ENCODE measurements at regions of chr1 and their contacts with region 1.

Region 1: DNA sequence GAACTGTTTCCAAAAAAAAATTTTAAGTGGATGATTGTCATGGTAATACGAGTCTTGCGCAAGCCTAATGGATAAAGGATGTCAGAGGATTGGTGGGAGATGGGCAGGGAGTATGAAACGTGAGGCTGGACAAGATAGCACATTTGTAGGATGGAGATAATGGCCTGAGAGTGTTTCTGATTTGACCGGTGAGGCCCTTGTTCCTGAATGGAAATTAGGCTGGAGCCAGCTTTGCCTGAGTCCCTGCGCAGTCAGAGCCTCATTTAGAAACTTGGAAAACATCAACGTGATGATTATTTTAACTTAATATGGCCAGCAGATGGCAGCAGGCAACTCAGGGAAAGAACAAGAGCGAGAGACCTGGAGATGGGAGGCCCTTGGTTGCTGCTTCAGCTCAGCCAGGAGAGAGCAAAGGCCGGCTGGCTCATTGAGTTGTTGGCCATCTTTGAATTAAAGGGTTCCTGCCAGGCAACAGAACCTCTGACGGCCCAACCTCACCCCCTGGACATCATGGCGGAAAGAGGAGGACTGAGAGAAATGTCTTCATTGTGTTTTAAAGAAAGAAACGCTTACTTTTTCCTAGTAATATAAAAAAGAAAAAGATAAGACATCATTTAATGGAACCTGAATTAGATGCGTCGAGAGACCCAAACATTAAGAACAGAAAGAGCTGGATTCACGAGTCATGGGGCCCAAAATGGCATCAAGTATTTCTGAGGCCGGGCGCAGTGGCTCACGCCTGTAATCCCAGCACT is 80.3 kb downstream of the SELENOF start:
- DNase-seq: peak; percentile 79 to 89
- H3K4me3 ChIP-seq: no peak overlapping the region
- CTCF ChIP-seq: no peak
- POLR2A ChIP-seq: no peak

Region 2: GRCh38 chr1:86965012-86965826 is 131.6 kb after region 1 on chr1:
- intact Hi-C with region 1: loop called (anchors 10 kb)
- DNase-seq: peak in 1 of 2 donors; percentile 16
- H3K4me3 ChIP-seq: no peak overlapping the region
- CTCF ChIP-seq: no peak
- POLR2A ChIP-seq: no peak

Region 3: DNA sequence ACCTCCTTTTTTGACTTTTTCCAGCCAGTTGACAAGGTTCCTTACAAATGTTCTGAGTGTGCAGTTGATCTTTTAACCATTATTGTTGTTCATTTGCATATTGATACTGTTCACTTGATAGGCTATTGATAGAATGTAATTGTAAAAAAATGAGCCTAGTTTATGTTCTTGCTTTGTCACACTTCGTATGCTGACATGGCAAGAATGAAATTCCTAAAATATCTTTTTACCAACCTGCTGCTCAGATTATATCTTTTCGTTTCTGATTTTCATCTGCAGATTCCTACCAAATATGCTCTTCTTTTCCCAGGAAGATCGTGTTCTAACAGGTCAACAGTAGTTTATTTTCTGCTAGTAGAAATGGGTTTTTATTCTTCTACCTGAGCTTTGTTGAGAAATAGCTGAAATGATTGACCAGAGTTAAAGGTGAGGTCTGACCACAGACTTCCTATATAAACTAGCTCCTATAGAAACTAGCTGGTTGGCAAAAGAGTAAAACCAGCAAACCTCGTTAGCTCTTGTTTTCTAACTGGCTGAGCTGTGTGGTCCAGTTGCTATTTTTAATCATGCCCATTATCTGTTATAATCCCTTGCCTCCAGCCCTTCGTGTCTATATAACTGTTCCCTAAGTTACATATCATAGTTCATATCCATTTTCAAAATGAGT is 255.6 kb after region 1 on chr1:
- intact Hi-C with region 1: loop called (anchors 5 kb)
- DNase-seq: no peak
- H3K4me3 ChIP-seq: no peak overlapping the region
- CTCF ChIP-seq: no peak
- POLR2A ChIP-seq: no peak

Region 4: GRCh38 chr1:87386217-87386790 is 552.7 kb after region 1 on chr1:
- intact Hi-C with region 1: no loop called
- DNase-seq: no peak
- H3K4me3 ChIP-seq: no peak overlapping the region
- CTCF ChIP-seq: no peak
- POLR2A ChIP-seq: no peak